CD8-positive, alpha-beta T cell (primary cell): ENCODE measurements at regions of chr9 and their contacts with region 1.

Region 1: DNA sequence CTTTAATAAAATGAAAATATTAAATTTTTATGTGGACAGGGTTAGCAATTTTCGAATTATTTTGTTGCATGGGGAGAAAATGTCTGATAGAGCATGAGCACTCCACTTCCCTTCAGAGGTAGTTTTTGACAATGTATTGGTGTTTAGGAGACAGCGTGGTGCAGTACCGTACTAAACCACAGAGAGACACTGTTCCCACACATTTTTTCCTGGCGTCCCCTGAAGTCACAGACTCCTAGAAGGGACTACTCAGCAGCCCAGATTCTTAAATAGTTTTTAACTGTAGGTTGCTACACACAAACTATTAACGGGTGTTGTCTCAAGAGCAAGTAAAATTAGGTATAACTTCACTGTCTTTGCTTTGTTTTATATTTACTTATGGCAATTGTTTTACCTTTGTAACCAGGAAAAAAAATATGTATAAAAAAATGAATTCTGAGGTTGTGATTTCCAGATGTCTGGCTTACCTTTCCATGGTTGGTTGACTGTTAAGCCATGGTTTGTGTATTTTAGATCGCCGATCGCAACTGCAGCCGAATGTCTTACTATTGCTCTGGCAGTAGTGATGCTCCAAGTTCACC is 171.2 kb downstream of the DOCK8 start:
- DNase-seq: peak in 2 of 9 experiments; percentile 26 to 38
- ATAC-seq: peak; percentile 69
- H3K4me3 ChIP-seq: no peak overlapping the region
- H3K4me3 Mint-ChIP-seq: no peak overlapping the region
- H3K27ac ChIP-seq: no peak overlapping the region
- H3K27ac Mint-ChIP-seq: no peak overlapping the region
- H3K4me1 ChIP-seq: no peaks in the 10 kb centered on the region
- H3K4me1 Mint-ChIP-seq: no peaks in the 10 kb centered on the region
- H3K27me3 ChIP-seq: no peaks in the 10 kb centered on the region
- H3K27me3 Mint-ChIP-seq: no peaks in the 10 kb centered on the region
- CTCF ChIP-seq: peak; percentile 50

Region 2: DNA sequence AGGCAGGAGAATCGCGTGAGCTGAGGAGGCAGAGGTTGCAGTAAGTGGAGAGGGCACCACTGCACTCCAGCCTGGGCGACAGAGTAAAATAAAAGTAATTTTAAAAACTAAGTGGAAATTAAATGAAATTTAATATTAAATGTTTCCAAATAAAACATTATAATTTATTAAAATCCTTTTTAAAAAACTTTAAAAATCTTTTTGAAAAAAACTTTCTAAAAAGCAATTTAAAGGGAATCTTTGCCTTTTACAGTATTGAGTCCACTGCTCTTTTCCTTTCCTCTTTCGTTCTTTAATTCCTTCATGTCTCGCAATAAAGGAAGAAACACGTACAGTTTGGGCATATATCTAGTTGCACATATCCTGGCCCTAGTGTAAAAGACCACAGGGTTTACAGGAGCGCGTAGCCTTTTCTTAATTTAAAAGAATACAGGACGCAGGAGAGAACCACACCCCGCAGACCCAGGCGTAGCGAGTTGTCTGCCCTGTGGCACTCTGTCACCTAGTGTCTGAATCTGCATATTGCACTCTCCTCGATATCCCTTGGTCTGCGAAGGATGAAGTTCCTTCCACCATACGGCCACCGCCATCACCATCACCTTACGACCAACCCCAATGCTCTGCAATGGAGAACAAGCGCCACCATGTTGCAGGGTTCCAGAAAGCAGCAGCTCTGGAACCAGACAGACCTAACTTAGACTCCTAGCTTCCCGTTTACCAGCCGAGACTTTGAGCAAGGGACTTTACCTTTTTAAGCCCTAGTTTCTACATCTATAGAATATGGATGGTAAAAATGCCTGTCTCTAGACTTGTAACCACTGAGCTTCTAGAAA is 378.0 kb after region 1 on chr9:
- CTCF ChIA-PET with region 1: no interaction called
- POLR2A ChIA-PET with region 1: no interaction called
- intact Hi-C with region 1: loop called in 1 of 2 experiments (anchors 5 kb)
- DNase-seq: peak in 5 of 9 experiments; percentile 9 to 58 (median 45)
- ATAC-seq: peak; percentile 62
- H3K4me3 ChIP-seq: no peak overlapping the region
- H3K4me3 Mint-ChIP-seq: no peak overlapping the region
- H3K27ac ChIP-seq: no peak overlapping the region
- H3K27ac Mint-ChIP-seq: no peak overlapping the region
- H3K4me1 ChIP-seq: no peaks in the 10 kb centered on the region
- H3K4me1 Mint-ChIP-seq: peaks cover 4% of the 10 kb centered on the region
- H3K27me3 ChIP-seq: no peaks in the 10 kb centered on the region
- H3K27me3 Mint-ChIP-seq: peaks cover 22% of the 10 kb centered on the region
- CTCF ChIP-seq: peak; percentile 19

Region 3: GRCh38 chr9:806285-807156 is 420.6 kb after region 1 on chr9:
- CTCF ChIA-PET with region 1: no interaction called
- POLR2A ChIA-PET with region 1: no interaction called
- intact Hi-C with region 1: loop called (anchors 5 to 10 kb)
- DNase-seq: peak in 2 of 9 experiments; percentile 34 to 46
- ATAC-seq: no peak
- H3K4me3 ChIP-seq: no peak overlapping the region
- H3K4me3 Mint-ChIP-seq: no peak overlapping the region
- H3K27ac ChIP-seq: no peak overlapping the region
- H3K27ac Mint-ChIP-seq: no peak overlapping the region
- H3K4me1 ChIP-seq: no peaks in the 10 kb centered on the region
- H3K4me1 Mint-ChIP-seq: no peaks in the 10 kb centered on the region
- H3K27me3 ChIP-seq: no peaks in the 10 kb centered on the region
- H3K27me3 Mint-ChIP-seq: peaks cover 13% of the 10 kb centered on the region
- CTCF ChIP-seq: peak; percentile 41

Region 4: GRCh38 chr9:1009101-1009707 is 623.3 kb after region 1 on chr9:
- CTCF ChIA-PET with region 1: no interaction called
- POLR2A ChIA-PET with region 1: no interaction called
- intact Hi-C with region 1: loop called in 1 of 2 experiments (anchors 10 kb)
- DNase-seq: peak; percentile 49 to 74 (median 65)
- ATAC-seq: peak; percentile 74
- H3K4me3 ChIP-seq: no peak overlapping the region
- H3K4me3 Mint-ChIP-seq: no peak overlapping the region
- H3K27ac ChIP-seq: no peak overlapping the region
- H3K27ac Mint-ChIP-seq: no peak overlapping the region
- H3K4me1 ChIP-seq: no peaks in the 10 kb centered on the region
- H3K4me1 Mint-ChIP-seq: no peaks in the 10 kb centered on the region
- H3K27me3 ChIP-seq: peaks cover 0 to 2% of the 10 kb centered on the region in 2 experiments
- H3K27me3 Mint-ChIP-seq: peaks cover 37% of the 10 kb centered on the region
- CTCF ChIP-seq: peak; percentile 78